ENCODE measurements at regions of chr9 and their contacts with region 1.

Region 1: GRCh38 chr9:115349526-115349925 is 231.6 kb upstream of the TNC start:
- DNase-seq: no peak
- ATAC-seq: no peak
- H3K4me3 ChIP-seq: no peak overlapping the region
- H3K27ac ChIP-seq: no peak overlapping the region
- H3K4me1 ChIP-seq: no peaks in the 10 kb centered on the region
- H3K27me3 ChIP-seq: no peaks in the 10 kb centered on the region
- CTCF ChIP-seq: no peak
- EP300 ChIP-seq: no peak
- POLR2A ChIP-seq: no peak
- RAD21 ChIP-seq: no peak

Region 2: DNA sequence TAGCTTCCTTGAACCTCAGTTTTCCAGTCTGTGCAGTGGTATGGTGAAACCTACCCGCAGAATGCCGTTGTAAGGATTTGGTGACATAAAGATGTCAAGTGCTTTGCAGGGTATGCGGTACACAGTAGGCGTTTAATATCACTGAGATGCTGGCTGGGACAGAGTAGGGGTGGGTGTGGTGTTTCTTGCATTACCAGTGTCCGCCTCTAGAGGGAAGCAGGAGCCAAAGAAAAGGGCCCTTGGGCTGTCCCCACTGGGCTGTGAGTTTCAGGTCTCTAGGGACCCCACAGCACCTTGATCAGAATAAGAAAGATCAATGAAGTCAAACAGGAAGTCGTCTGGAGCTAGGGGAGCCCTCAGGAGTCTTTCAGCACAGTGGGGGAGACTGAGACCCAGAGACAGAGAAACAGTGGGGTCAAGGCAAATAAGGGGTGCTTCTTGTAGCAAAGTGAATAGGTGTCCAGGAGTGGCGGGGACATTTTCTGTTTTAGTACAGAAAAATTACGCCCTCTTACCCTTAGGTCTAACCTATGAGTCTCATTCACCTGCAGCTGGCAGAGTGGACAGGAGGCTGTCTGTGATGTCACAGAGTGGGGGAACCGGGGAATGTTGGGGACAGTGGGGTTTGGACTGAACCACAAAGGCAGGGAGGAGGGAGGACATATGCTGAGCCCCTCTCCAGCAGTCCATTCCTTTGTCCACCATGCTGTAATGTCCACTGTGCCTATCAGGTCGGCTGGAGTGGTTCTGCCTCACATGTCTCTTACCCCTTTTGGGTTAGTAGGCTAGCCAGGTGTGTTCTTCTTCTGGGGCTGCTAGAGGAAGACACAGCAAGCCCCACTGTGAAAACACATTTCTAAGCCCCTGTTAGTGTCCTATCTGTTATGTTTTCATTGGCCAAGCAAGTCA is 687.2 kb before region 1 on chr9:
- CTCF ChIA-PET with region 1: no interaction called
- POLR2A ChIA-PET with region 1: no interaction called
- in situ Hi-C with region 1: no loop called
- intact Hi-C with region 1: loop called (anchors 10 kb)
- DNase-seq: peak; percentile 22
- ATAC-seq: peak; percentile 96
- H3K4me3 ChIP-seq: no peak overlapping the region
- H3K27ac ChIP-seq: no peak overlapping the region
- H3K4me1 ChIP-seq: no peaks in the 10 kb centered on the region
- H3K27me3 ChIP-seq: peaks cover 0 to 27% of the 10 kb centered on the region in 2 experiments; a peak in 3 of 5 replicates
- CTCF ChIP-seq: peak; percentile 77
- EP300 ChIP-seq: no peak
- POLR2A ChIP-seq: no peak
- RAD21 ChIP-seq: peak; percentile 56

Region 3: GRCh38 chr9:115524453-115525059 is 175.0 kb after region 1 on chr9:
- CTCF ChIA-PET with region 1: interaction called, 4 read pairs
- POLR2A ChIA-PET with region 1: no interaction called
- in situ Hi-C with region 1: no loop called
- intact Hi-C with region 1: loop called (anchors 1 kb)
- DNase-seq: peak; percentile 32
- ATAC-seq: peak; percentile 55; the same call in 2 of the 3 replicates
- H3K4me3 ChIP-seq: no peak overlapping the region
- H3K27ac ChIP-seq: no peak overlapping the region
- H3K4me1 ChIP-seq: no peaks in the 10 kb centered on the region
- H3K27me3 ChIP-seq: no peaks in the 10 kb centered on the region; a peak in 1 of 5 replicates
- CTCF ChIP-seq: peak; percentile 71
- EP300 ChIP-seq: no peak
- POLR2A ChIP-seq: no peak
- RAD21 ChIP-seq: peak; percentile 60

Measured in HepG2 (cell line).